HEK293 (cell line): ENCODE measurements at regions of chr6 and their contacts with region 1.

Region 1: DNA sequence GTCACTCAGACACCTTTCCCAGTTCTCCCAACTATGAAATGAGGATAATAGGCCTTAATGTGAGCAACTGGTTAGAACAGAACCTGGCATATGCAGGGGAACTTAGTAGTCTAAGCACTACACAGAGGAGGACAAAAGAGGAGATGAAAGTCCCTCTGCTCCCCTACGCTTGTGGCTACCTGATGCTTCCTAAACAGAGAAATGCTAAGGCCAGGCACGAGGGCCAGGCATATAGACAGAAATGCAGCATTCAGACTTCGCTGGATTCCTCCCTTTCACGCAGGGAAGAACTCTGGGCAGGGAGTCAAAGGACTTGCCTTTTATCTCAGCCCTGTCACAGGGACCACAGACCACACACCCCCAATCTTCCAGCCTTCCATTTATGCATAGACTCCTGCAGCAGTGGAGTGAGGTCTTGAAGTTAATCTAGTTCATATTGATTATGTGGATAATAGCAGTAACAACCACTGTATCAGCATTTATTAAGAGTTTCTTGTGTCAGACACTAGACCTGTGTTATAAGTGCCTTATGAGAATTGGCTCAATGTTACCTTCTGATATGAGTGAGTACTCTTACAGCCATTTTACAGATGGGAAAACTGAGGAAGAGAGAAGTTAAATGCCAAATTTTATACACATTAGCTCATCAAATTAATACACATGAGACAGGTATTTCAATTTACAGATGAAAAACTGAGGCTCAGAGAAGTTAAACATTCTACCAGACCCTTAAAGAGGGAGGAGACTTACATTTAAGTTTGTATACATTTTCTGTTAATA is 27.0 kb upstream of the TRAF3IP2 start:
- H3K4me3 ChIP-seq: no peak overlapping the region
- H3K27ac ChIP-seq: no peak overlapping the region; the same call in 1 of the 2 replicates
- H3K4me1 ChIP-seq: peaks cover 9% of the 10 kb centered on the region
- CTCF ChIP-seq: no peak

Region 2: DNA sequence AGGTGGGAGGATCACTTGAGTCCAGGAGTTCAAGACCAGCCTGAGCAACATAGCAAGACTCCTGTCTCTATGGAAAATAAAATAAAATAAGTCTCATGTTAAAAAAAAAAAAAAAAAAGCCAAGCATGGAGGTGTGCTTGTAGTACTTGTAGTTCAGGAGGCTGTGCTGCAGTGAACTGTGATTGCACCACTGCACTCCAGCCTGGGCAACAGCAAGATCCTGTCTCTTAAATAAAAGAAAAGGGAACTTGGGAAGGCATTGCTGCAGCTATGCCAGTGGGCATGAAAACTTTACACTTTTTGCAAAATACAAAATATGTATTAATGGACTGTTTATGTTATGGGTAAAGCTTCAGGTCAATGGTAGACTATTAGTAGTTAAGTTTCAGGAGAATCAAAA is 112.1 kb before region 1 on chr6:
- CTCF ChIA-PET with region 1: no interaction called
- POLR2A ChIA-PET with region 1: interaction called, 11 read pairs
- H3K4me3 ChIP-seq: no peak overlapping the region
- H3K27ac ChIP-seq: no peak overlapping the region
- H3K4me1 ChIP-seq: peaks cover 3% of the 10 kb centered on the region; the same call in 1 of the 2 replicates
- CTCF ChIP-seq: no peak